ENCODE measurements at regions of chr15 and their contacts with region 1.

Region 1: GRCh38 chr15:68875377-68876116 is 54.8 kb upstream of the SPESP1 start:
- DNase-seq: peak; percentile 92
- ATAC-seq: peak; percentile 88
- H3K4me3 Mint-ChIP-seq: no peak overlapping the region
- H3K27ac Mint-ChIP-seq: no peak overlapping the region
- H3K4me1 Mint-ChIP-seq: peaks cover 2% of the 10 kb centered on the region
- H3K27me3 Mint-ChIP-seq: peaks cover 37% of the 10 kb centered on the region

Region 2: DNA sequence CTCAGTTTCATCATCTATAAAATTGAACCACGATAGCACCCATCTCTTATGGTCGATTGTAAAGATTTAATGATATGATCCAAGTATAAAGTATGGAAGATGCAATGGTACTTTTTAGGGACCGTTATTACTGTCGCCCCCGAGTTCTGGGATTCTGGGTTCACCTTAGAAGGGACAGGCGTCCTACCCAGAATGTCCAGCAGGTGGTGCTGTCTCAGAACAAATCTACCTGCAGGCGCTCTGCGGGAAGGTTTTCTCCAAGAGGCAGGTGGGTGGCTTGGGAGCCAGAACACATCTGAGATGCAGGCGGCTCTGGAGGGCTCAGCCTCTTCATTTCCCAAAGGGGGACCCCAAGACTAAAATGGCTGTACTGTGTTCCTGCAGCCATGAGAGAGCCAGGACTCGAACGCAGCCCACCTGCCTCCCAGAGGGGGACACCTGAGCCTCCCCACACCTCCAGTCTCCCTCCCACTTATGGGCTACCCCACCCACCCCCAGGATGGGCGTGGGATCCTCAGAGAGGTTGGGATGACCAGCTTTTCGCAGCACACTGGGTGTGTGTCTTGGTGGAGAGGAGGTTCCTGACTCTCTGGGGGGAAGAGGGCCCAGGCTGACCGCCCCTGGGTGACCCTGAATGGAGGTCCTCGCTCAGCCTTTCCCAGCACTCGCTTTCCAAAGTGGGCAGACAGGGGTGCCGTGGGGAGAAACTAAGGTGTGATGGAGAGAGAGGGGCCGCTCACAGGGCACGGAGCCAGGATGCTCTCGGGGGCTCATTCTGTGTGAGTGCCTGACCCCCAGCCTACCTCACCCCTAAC is 324.9 kb before region 1 on chr15:
- CTCF ChIA-PET with region 1: interaction called, 18 read pairs
- POLR2A ChIA-PET with region 1: no interaction called
- DNase-seq: peak; percentile 84
- ATAC-seq: peak; percentile 51
- H3K4me3 Mint-ChIP-seq: no peak overlapping the region
- H3K27ac Mint-ChIP-seq: no peak overlapping the region
- H3K4me1 Mint-ChIP-seq: no peaks in the 10 kb centered on the region
- H3K27me3 Mint-ChIP-seq: peaks cover 20% of the 10 kb centered on the region

Region 3: GRCh38 chr15:68672781-68673205 is 202.8 kb before region 1 on chr15:
- CTCF ChIA-PET with region 1: interaction called, 20 read pairs
- POLR2A ChIA-PET with region 1: no interaction called
- DNase-seq: no peak
- ATAC-seq: no peak
- H3K4me3 Mint-ChIP-seq: no peak overlapping the region
- H3K27ac Mint-ChIP-seq: no peak overlapping the region
- H3K4me1 Mint-ChIP-seq: peaks cover 4% of the 10 kb centered on the region
- H3K27me3 Mint-ChIP-seq: peaks cover 15% of the 10 kb centered on the region

Region 4: GRCh38 chr15:68783226-68784058 is 92.1 kb before region 1 on chr15:
- CTCF ChIA-PET with region 1: interaction called, 63 read pairs
- POLR2A ChIA-PET with region 1: interaction called, 3 read pairs
- DNase-seq: peak; percentile 72
- ATAC-seq: peak; percentile 91
- H3K4me3 Mint-ChIP-seq: no peak overlapping the region
- H3K27ac Mint-ChIP-seq: peak overlapping the region; percentile 75
- H3K4me1 Mint-ChIP-seq: peaks cover 58% of the 10 kb centered on the region
- H3K27me3 Mint-ChIP-seq: no peaks in the 10 kb centered on the region

Region 5: GRCh38 chr15:68829068-68829467 is 46.5 kb before region 1 on chr15:
- CTCF ChIA-PET with region 1: interaction called, 13 read pairs
- POLR2A ChIA-PET with region 1: interaction called, 3 read pairs
- DNase-seq: peak; percentile 47
- ATAC-seq: peak; percentile 69
- H3K4me3 Mint-ChIP-seq: no peak overlapping the region
- H3K27ac Mint-ChIP-seq: no peak overlapping the region
- H3K4me1 Mint-ChIP-seq: peaks cover 21% of the 10 kb centered on the region
- H3K27me3 Mint-ChIP-seq: peaks cover 10% of the 10 kb centered on the region

Region 6: DNA sequence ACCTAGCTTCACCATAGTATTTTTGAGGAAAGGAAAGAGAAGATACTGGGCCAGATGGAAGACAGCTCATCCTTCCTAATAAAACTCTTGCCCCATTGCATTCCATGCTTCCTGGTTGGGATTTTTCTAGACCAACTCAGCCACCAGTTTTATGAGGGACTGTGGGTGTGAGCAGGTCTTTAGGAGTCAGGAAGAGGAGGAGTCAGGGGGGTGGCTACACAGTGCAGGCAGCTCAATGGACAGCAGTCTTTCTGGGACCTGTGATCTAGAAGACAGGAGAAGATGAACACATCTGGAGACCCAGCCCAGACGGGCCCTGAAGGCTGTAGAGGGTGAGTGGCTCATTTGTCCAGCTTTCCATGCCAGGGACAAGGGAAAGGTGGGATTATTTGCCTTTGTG is 138.9 kb after region 1 on chr15 and contains the start of gene NOX5:
- CTCF ChIA-PET with region 1: no interaction called
- POLR2A ChIA-PET with region 1: no interaction called
- DNase-seq: no peak
- ATAC-seq: no peak
- H3K4me3 Mint-ChIP-seq: no peak within 1 kb of the TSS
- H3K27ac Mint-ChIP-seq: no peak within 1 kb of the TSS
- H3K4me1 Mint-ChIP-seq: no peaks in the 10 kb centered on the region
- H3K27me3 Mint-ChIP-seq: peaks cover 3% of the 10 kb centered on the region
- total RNA-seq, gene NOX5: not detected

Measured in activated CD8-positive, alpha-beta T cell treated with anti-CD3 and anti-CD28 coated beads, Interleukin-2, amount 10 ng/mL, durations not matched to agents 7 days and 5 days (primary cell).